ENCODE measurements at regions of chr7 and their contacts with region 1.

Region 1: GRCh38 chr7:13990984-13991790 is 1.7 kb upstream of the ETV1 start:
- DNase-seq: peak; percentile 96
- H3K4me3 Mint-ChIP-seq: no peak overlapping the region
- H3K27ac Mint-ChIP-seq: no peak overlapping the region
- H3K4me1 Mint-ChIP-seq: no peaks in the 10 kb centered on the region
- H3K27me3 Mint-ChIP-seq: no peaks in the 10 kb centered on the region
- CTCF ChIP-seq: no peak

Region 2: GRCh38 chr7:13742811-13743210 is 248.4 kb before region 1 on chr7:
- CTCF ChIA-PET with region 1: no interaction called
- POLR2A ChIA-PET with region 1: no interaction called
- intact Hi-C with region 1: loop called (anchors 5 kb)
- DNase-seq: peak; percentile 66
- H3K4me3 Mint-ChIP-seq: no peak overlapping the region
- H3K27ac Mint-ChIP-seq: peak overlapping the region; percentile 4
- H3K4me1 Mint-ChIP-seq: no peaks in the 10 kb centered on the region
- H3K27me3 Mint-ChIP-seq: no peaks in the 10 kb centered on the region
- CTCF ChIP-seq: no peak

Region 3: DNA sequence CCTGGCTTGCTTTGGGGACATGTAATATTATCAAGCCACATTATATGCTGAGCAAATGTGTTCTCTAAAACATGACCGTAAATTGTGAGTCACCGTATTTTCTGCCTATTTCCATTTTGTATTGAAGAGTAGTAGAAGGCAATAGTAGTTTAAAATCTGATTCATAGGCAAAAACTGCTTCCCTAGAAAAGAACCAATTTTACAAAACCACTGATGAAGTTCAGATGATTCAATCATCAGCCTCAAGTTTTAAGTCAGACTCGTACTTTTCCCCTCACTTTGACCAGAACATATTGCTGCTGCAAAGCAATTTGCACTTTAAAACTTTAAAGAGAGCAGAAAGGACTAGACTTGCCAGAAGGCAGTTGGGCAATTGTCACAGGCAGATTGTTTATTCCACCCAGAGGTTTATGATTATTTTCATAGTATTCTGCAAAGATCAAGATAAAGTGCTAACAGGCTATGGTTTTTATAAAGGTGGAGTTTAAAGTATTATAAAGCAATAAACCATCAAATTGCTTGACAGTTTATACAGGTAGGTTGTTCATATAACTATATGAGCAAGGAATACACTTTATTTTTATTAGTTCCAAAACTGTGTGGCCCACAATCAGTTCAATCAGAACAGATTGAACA is 169.9 kb before region 1 on chr7:
- CTCF ChIA-PET with region 1: no interaction called
- POLR2A ChIA-PET with region 1: no interaction called
- intact Hi-C with region 1: no loop called
- DNase-seq: no peak
- H3K4me3 Mint-ChIP-seq: no peak overlapping the region
- H3K27ac Mint-ChIP-seq: no peak overlapping the region
- H3K4me1 Mint-ChIP-seq: no peaks in the 10 kb centered on the region
- H3K27me3 Mint-ChIP-seq: no peaks in the 10 kb centered on the region
- CTCF ChIP-seq: no peak

Region 4: GRCh38 chr7:13920053-13920697 is 71.0 kb before region 1 on chr7:
- CTCF ChIA-PET with region 1: interaction called, 3 read pairs
- POLR2A ChIA-PET with region 1: no interaction called
- intact Hi-C with region 1: loop called (anchors 1 kb)
- DNase-seq: peak; percentile 96
- H3K4me3 Mint-ChIP-seq: peak overlapping the region; percentile 46
- H3K27ac Mint-ChIP-seq: peak overlapping the region; percentile 97
- H3K4me1 Mint-ChIP-seq: peaks cover 16% of the 10 kb centered on the region
- H3K27me3 Mint-ChIP-seq: no peaks in the 10 kb centered on the region
- CTCF ChIP-seq: no peak

Region 5: DNA sequence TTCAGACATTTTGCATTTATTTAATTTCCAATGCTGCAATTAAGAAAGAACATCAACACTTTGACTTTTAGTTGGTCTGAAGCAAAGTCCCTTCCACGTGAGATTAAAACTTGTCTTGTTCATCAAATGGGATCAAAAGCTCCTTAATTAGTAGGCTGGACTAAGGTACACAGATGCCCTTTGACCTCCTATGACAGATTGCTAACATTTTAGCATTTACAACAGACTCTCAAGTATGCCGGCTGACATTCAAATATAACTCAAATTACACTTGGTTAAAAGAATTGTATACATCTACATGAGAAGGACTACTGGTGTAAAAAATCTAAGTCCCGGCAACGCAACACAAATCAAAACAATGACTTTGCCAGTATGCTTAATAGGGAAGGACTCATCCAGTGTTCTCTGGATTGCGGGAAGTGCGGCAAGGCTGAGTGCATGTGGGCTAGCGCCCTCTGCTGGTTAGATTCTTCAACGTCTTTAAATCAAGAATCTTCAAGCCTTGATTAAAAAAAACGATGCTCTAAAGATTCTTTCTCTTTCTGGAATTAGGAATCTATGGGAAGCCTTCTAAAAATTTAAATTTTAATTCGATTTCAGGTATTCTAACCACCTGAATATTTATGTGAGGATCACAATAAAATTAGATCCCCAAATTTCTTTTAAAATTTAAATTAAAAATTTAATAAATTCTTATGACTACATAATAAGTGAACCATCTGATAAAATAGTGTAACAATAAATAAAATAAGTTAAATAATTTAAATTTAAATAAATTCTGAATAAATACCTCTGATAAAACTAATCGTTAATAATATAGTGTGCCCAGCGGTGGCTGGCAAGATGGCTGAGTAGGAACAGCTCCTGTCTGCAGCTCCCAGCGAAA is 466.6 kb after region 1 on chr7:
- CTCF ChIA-PET with region 1: interaction called, 20 read pairs
- POLR2A ChIA-PET with region 1: no interaction called
- intact Hi-C with region 1: loop called (anchors 1 kb)
- DNase-seq: peak; percentile 81
- H3K4me3 Mint-ChIP-seq: no peak overlapping the region
- H3K27ac Mint-ChIP-seq: no peak overlapping the region
- H3K4me1 Mint-ChIP-seq: no peaks in the 10 kb centered on the region
- H3K27me3 Mint-ChIP-seq: no peaks in the 10 kb centered on the region
- CTCF ChIP-seq: peak; percentile 76

Measured in MCF 10A (cell line).